ENCODE measurements at regions of chr19 and their contacts with region 1.

Region 1: GRCh38 chr19:57632987-57633831 is at the start of gene ZNF211:
- DNase-seq: peak; percentile 70 to 95 (median 89)
- ATAC-seq: peak; percentile 100
- H3K4me3 ChIP-seq: peak within 1 kb of the TSS; percentile 81 to 82
- H3K4me3 Mint-ChIP-seq: peak within 1 kb of the TSS; percentile 96
- H3K27ac ChIP-seq: peak within 1 kb of the TSS; percentile 60 to 78
- H3K27ac Mint-ChIP-seq: peak within 1 kb of the TSS; percentile 94
- H3K4me1 ChIP-seq: peaks cover 13% of the 10 kb centered on the region
- H3K4me1 Mint-ChIP-seq: peaks cover 29% of the 10 kb centered on the region
- H3K27me3 ChIP-seq: no peaks in the 10 kb centered on the region
- H3K27me3 Mint-ChIP-seq: no peaks in the 10 kb centered on the region
- CTCF ChIP-seq: no peak
- total RNA-seq, gene ZNF211: 34.4 to 35.5 TPM

Region 2: DNA sequence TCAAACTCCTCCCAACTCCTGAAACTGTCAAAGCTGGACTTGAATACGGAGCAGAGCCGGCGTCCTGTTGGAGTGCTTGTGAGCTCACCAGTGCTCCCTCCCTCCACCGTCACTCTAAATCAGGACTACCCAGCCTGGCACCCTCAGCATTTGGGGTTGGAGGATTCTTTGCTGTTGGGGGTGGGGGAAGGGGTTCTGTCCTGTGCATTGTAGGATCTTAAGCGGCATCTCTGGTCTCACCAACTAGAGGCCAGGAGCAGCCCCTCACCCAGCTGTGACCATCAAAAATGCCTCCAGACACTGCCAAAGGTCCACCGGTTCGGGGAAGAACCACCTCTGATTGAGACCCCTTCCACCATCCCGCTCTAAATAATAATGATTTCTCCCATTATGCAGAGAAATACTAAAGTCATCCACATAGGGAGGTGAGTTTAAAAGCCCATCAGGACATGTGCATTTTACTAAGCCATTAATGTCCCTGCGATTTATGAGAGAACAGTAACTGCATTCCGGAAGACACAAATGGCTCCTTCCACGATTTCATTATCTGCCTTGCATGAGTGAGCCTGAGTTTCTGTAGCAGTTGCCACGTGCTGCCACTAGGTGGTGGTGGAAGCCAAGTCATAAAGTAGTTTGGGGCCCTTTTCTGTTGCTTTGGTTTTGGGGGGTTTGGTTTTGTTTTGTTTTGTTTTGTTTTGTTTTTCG is 529.5 kb before region 1 on chr19:
- CTCF ChIA-PET with region 1: no interaction called
- POLR2A ChIA-PET with region 1: no interaction called
- intact Hi-C with region 1: loop called in 1 of 2 experiments (anchors 10 kb)
- DNase-seq: peak; percentile 14 to 79 (median 59)
- ATAC-seq: peak; percentile 97
- H3K4me3 ChIP-seq: peak overlapping the region in 1 of 2 experiments; percentile 11
- H3K4me3 Mint-ChIP-seq: peak overlapping the region; percentile 70
- H3K27ac ChIP-seq: no peak overlapping the region
- H3K27ac Mint-ChIP-seq: no peak overlapping the region
- H3K4me1 ChIP-seq: peaks cover 4% of the 10 kb centered on the region
- H3K4me1 Mint-ChIP-seq: peaks cover 6% of the 10 kb centered on the region
- H3K27me3 ChIP-seq: peaks cover 0 to 4% of the 10 kb centered on the region in 2 experiments
- H3K27me3 Mint-ChIP-seq: peaks cover 26% of the 10 kb centered on the region
- CTCF ChIP-seq: peak; percentile 82

Region 3: GRCh38 chr19:57477191-57478008 is 155.8 kb before region 1 on chr19 and contains the start of gene ZNF772:
- CTCF ChIA-PET with region 1: interaction called, 3 read pairs
- POLR2A ChIA-PET with region 1: no interaction called
- intact Hi-C with region 1: loop called (anchors 1 kb)
- DNase-seq: peak; percentile 76 to 95 (median 88)
- ATAC-seq: peak; percentile 99
- H3K4me3 ChIP-seq: peak within 1 kb of the TSS; percentile 78 to 86
- H3K4me3 Mint-ChIP-seq: peak within 1 kb of the TSS; percentile 88
- H3K27ac ChIP-seq: peak within 1 kb of the TSS; percentile 47 to 83
- H3K27ac Mint-ChIP-seq: peak within 1 kb of the TSS; percentile 92
- H3K4me1 ChIP-seq: peaks cover 8% of the 10 kb centered on the region
- H3K4me1 Mint-ChIP-seq: peaks cover 14% of the 10 kb centered on the region
- H3K27me3 ChIP-seq: peaks cover 0 to 2% of the 10 kb centered on the region in 2 experiments
- H3K27me3 Mint-ChIP-seq: peaks cover 2% of the 10 kb centered on the region
- CTCF ChIP-seq: peak; percentile 65
- total RNA-seq, gene ZNF772: 0.41 to 0.97 TPM

Region 4: GRCh38 chr19:57578487-57579205 is 54.6 kb before region 1 on chr19 and contains the start of gene ZNF416:
- CTCF ChIA-PET with region 1: no interaction called
- POLR2A ChIA-PET with region 1: interaction called, 4 read pairs
- intact Hi-C with region 1: loop called (anchors 1 kb)
- DNase-seq: peak; percentile 91 to 99 (median 94)
- ATAC-seq: peak; percentile 95
- H3K4me3 ChIP-seq: peak within 1 kb of the TSS; percentile 74 to 84
- H3K4me3 Mint-ChIP-seq: peak within 1 kb of the TSS; percentile 85
- H3K27ac ChIP-seq: peak within 1 kb of the TSS; percentile 55 to 65
- H3K27ac Mint-ChIP-seq: peak within 1 kb of the TSS; percentile 81
- H3K4me1 ChIP-seq: peaks cover 25% of the 10 kb centered on the region
- H3K4me1 Mint-ChIP-seq: peaks cover 25% of the 10 kb centered on the region
- H3K27me3 ChIP-seq: no peaks in the 10 kb centered on the region
- H3K27me3 Mint-ChIP-seq: no peaks in the 10 kb centered on the region
- CTCF ChIP-seq: no peak
- total RNA-seq, gene ZNF416: 7.7 to 8.2 TPM

Region 5: GRCh38 chr19:57682226-57682766 is 49.1 kb after region 1 on chr19:
- CTCF ChIA-PET with region 1: no interaction called
- POLR2A ChIA-PET with region 1: interaction called, 3 read pairs
- intact Hi-C with region 1: loop called (anchors 1 to 2 kb)
- DNase-seq: no peak
- ATAC-seq: no peak
- H3K4me3 ChIP-seq: peak overlapping the region; percentile 91 to 94
- H3K4me3 Mint-ChIP-seq: peak overlapping the region; percentile 98
- H3K27ac ChIP-seq: peak overlapping the region; percentile 69 to 71
- H3K27ac Mint-ChIP-seq: peak overlapping the region; percentile 97
- H3K4me1 ChIP-seq: peaks cover 19% of the 10 kb centered on the region
- H3K4me1 Mint-ChIP-seq: peaks cover 36% of the 10 kb centered on the region
- H3K27me3 ChIP-seq: peaks cover 0 to 2% of the 10 kb centered on the region in 2 experiments
- H3K27me3 Mint-ChIP-seq: peaks cover 7% of the 10 kb centered on the region
- CTCF ChIP-seq: no peak

Region 6: DNA sequence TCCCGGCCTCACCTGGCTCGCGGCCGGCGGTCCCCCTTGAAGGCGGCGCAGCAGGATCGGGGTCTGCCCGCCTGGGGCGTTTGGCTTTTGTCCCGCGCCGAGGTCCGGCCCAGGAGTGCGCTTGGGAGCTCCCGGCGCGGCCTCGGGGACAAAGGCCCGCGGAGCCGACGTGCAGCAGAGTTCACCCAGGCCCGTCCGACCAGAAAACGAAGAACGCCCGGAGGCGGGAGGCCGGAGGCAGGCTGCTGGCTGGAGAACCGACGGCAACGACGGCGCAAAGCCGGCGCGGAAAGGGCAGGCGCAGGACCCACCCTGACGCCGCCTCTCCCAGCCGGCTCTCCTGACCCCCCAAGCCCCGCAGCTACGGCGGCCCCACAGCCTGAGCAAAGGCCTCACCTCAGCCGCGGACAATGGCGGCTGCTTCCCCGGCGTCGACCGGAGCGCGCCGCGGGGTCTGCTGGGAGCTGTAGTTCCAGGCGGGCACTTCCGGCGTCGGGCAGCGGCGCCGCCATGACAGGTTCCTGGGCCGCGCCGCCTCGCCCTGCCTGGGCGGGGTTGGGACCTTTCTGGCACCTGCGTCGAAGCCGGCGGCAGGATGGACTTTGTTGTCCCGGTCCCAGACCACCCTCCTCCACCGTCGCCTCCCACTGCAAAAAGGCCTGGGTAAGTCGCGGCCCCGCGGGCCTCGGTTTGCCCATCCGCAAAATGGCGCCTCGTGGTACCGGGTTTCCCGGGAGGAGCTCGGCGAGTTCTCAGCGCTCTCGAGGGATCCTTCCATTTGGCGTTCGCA is 369.4 kb after region 1 on chr19 and contains the start of gene ZNF606:
- CTCF ChIA-PET with region 1: no interaction called
- POLR2A ChIA-PET with region 1: no interaction called
- intact Hi-C with region 1: loop called in 1 of 2 experiments (anchors 1 kb)
- DNase-seq: peak; percentile 72 to 93 (median 84)
- ATAC-seq: peak; percentile 94
- H3K4me3 ChIP-seq: peak within 1 kb of the TSS; percentile 90 to 93
- H3K4me3 Mint-ChIP-seq: peak within 1 kb of the TSS; percentile 87
- H3K27ac ChIP-seq: peak within 1 kb of the TSS; percentile 82 to 93
- H3K27ac Mint-ChIP-seq: peak within 1 kb of the TSS; percentile 94
- H3K4me1 ChIP-seq: peaks cover 20% of the 10 kb centered on the region
- H3K4me1 Mint-ChIP-seq: peaks cover 34% of the 10 kb centered on the region
- H3K27me3 ChIP-seq: no peaks in the 10 kb centered on the region
- H3K27me3 Mint-ChIP-seq: no peaks in the 10 kb centered on the region
- CTCF ChIP-seq: no peak
- total RNA-seq, gene ZNF606: 11.2 to 13.0 TPM

Measured in CD8-positive, alpha-beta T cell (primary cell).